Ascending aorta (tissue), 2 donors: ENCODE measurements at regions of chr10 and their contacts with region 1.

Region 1: DNA sequence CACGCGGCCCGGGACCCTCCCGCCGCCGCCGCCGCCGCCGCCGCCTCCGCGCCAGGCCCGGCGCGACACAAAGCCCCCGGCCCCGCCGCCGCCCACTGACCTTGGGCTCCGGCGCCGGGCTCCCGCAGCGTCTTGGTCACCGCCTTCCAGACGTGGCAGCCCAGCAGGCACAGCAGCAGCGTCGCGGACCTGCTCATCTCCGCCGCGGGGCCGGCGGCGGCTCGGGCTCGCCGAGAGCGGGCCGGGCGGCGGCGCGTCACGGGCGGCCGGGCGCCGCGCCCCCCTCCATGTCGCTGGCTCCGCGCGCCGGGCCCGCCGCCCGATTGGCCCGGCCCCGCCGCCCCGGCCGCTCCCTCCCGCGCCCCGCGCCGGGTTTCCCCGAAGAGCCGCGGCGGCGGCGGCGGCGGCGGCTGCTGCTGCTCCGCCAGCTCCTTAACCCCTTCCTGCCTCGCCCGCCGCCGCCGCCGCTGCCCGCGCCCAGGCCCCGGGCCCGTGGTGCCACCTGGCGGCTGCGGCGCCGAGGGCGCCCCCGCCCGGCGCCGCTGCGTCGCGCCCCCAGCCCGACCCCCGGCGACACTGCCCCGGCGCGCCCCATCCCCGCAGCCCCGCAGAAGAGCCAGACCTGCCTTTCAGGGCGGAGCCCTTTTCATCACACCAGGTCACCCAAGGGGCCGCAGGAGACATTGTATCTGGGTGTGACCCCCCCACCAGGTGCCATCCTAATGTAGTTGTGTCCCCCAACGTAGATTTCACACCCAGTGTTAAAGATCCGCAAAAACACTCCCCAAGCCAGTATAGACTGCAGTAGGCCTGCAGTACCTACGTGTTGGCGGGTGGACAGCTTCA is at the start of gene FAM171A1:
- DNase-seq: peak in 1 of 2 donors; percentile 66
- H3K4me3 ChIP-seq: peak within 1 kb of the TSS; percentile 78 to 79
- H3K27ac ChIP-seq: peak within 1 kb of the TSS in 1 of 2 donors; percentile 19
- H3K4me1 ChIP-seq: peaks cover 0 to 4% of the 10 kb centered on the region in 2 donors
- H3K27me3 ChIP-seq: no peaks in the 10 kb centered on the region
- CTCF ChIP-seq: peak in 2 of 3 experiments; percentile 6 to 8
- total RNA-seq, gene FAM171A1: 27.7 TPM

Region 2: DNA sequence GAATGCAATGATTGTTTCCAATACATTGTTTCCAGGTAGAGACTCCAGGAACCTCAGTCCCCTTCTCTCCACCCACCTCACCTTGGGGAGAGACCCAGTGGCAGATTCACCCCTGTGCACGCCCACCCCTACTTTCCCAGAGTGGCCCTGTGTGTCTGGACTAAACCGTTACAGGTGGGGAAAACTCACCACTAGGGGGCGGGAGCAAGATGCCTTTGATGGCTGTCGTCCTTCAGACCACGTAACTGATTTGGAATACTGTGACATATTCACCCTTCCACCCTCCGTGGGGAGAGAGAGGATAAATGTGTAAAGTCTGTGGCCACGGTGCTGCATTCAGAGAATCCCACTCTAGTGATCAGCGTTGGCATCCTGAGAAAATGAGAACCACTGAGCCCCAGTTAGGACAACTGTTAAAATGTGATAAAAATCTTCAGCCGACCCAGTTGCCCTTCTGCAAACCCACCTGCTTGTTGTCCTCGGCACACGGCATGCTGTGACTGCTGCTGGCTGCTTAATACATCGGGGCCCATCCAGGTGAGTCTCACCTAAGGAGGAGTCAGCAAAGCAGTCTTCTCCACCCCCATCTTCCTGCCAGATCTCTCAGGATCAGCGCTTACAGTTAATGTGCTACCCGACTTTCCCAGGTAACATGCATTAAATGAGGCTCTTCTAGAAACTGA is 161.1 kb before region 1 on chr10:
- intact Hi-C with region 1: loop called (anchors 2 kb)
- DNase-seq: peak; percentile 21 to 91
- H3K4me3 ChIP-seq: peak overlapping the region in 1 of 2 donors; percentile 37
- H3K27ac ChIP-seq: no peak overlapping the region
- H3K4me1 ChIP-seq: peaks cover 0 to 2% of the 10 kb centered on the region in 2 donors
- H3K27me3 ChIP-seq: no peaks in the 10 kb centered on the region
- CTCF ChIP-seq: peak; percentile 60 to 82 (median 81)

Region 3: DNA sequence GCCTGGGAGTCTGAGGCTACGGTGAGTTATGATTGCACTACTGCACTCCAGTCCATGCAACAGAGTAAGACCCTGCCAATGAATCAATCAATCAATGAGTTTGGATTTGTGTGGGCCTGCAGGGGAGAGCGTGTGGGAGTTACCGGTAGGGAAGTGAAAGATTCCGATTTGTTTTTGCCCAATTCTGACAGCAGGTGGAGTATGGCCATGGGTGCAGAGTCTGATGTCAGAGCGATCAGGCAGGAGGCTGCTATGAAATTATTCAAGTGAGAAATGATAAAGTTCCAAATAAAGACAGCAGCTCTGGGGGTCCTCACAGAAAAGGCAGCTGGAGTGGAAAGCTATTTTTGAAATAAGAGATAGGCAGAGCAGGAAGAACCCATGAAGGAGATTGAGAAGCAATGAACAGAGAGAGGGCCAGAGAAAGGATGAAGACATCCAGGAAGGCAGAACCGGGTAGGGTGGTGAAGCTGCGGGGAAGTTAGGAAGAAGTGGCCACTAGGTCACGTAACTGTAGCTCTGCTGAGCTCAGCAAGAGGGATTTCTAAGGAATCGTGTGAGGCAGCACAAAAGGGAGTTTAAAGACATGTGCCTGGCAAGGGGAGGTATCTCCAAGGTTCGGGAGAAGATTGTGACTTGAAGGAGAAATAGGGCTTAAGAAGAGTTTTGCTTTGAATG is 108.9 kb before region 1 on chr10:
- intact Hi-C with region 1: loop called (anchors 2 kb)
- DNase-seq: no peak
- H3K4me3 ChIP-seq: no peak overlapping the region
- H3K27ac ChIP-seq: no peak overlapping the region
- H3K4me1 ChIP-seq: no peaks in the 10 kb centered on the region
- H3K27me3 ChIP-seq: no peaks in the 10 kb centered on the region
- CTCF ChIP-seq: peak in 2 of 3 experiments; percentile 32 to 50

Region 4: DNA sequence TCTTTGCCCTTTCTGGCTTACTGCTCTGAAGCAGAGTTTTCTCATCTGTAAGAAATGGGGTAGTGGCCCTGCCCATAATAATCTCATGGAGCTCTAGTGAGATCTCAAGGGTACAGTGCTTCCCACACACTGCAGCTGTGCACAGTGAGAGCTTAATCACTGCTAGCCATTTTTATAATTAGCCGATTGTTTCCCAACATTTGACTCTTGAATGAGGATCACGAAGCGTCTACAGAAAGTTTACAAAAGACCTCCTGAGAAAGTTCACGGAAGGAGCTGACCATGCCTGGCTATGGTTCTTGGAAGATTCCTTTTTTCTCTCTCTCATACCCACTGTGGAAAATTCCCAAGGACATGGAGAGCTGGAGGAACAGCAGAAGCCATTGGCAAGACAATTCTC is 70.4 kb before region 1 on chr10:
- intact Hi-C with region 1: no loop called
- DNase-seq: no peak
- H3K4me3 ChIP-seq: no peak overlapping the region
- H3K27ac ChIP-seq: no peak overlapping the region
- H3K4me1 ChIP-seq: no peaks in the 10 kb centered on the region
- H3K27me3 ChIP-seq: no peaks in the 10 kb centered on the region
- CTCF ChIP-seq: no peak

Region 5: DNA sequence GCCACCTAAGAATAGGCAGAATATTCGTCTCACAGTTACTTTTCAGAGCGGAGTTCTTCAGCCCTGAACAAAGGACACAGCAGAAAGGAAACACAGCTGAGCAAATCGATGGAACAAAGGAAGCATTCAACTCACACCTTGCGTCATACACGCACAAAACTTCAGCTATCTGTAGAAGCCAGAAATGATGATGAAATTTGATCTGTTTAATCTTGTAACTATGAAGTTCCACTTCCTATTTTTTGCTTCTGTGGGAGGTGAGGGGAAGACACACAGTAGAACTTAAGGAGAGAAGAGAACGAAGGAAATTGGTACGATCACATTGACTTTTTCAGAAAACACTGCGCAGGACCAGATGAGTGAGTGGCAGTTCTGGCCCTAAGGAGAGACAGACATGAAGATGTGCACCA is 26.2 kb before region 1 on chr10:
- intact Hi-C with region 1: no loop called
- DNase-seq: no peak
- H3K4me3 ChIP-seq: no peak overlapping the region
- H3K27ac ChIP-seq: no peak overlapping the region
- H3K4me1 ChIP-seq: no peaks in the 10 kb centered on the region
- H3K27me3 ChIP-seq: no peaks in the 10 kb centered on the region
- CTCF ChIP-seq: no peak

Region 6: DNA sequence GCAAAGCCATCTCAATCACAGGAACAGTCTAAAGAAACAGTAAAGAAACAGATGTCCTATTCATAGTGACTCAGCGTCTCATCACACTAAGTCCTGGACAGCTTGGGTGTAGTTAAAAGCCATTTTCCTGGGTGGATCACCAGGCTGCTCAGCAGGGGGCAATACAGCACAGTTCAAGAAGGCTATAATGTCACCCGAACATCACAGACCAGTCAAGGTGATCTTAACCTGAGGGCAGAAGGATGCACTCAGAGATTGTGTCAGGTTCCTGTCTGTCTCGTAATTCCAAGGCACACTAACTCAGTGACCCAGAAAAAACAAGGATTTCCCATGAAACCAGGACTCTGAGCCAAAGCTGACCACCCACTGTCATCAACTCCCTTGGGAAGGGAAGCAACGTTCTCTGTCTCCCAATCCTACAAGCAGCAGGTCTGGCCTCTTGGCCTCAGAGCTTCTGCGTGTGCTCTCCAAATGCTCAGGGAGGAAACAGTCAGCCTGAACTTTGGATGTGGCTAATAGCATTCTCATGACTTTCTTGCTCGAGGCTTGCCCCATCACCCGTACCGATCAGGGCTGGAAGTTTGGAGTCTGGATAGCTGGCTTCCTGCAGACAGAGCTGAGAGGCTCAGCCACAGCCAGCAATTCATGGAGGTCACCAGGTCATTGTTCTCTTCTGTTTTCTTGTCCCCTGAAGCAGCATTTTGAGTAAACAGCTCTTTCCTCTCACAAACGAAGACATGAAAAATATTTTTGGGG is 90.5 kb after region 1 on chr10:
- intact Hi-C with region 1: no loop called
- DNase-seq: peak in 1 of 2 donors; percentile 71
- H3K4me3 ChIP-seq: no peak overlapping the region
- H3K27ac ChIP-seq: peak overlapping the region; percentile 63 to 76
- H3K4me1 ChIP-seq: peaks cover 0 to 10% of the 10 kb centered on the region in 2 donors
- H3K27me3 ChIP-seq: no peaks in the 10 kb centered on the region
- CTCF ChIP-seq: peak in 1 of 3 experiments; percentile 37